Posterior vena cava (tissue), 2 donors: ENCODE measurements at regions of chr11 and their contacts with region 1.

Region 1: GRCh38 chr11:128198216-128198772 is 389.1 kb downstream of the ETS1 start:
- DNase-seq: no peak

Region 2: DNA sequence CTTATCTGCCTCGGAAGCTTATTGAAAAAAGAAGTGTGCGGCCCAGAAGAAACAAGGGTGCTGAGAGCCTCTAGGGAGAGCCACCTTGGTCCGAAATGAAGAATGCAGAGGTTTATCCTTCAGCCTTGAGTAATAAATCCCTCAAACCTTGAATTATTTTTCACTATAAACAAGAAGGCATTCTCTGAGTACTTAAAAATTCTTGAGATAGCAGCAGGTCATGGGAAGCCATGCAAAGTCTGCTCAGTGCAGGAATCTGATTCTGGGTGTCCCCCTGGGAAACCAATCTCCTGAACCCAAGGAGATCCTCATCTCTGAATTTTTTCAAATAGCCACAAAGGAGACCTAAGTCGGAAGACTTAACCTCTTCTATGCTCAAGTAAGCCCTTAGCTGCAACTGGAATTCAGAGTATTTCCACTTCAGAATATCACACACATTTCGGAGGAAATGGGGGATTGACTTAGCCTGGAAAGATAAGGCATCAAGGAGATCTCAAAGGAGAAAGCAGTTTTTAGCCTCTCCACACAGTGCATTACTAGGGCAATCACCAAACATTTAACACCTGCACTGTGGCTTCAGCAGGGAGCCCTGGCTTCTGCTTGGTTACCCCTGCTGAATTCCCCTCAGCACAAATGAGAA is 24.1 kb after region 1 on chr11:
- intact Hi-C with region 1: loop called in 1 of 2 experiments (anchors 2 kb)
- DNase-seq: no peak